Dorsolateral prefrontal cortex (tissue), 120 donors: ENCODE measurements at regions of chr9 and their contacts with region 1.

Region 1: GRCh38 chr9:127224178-127224882 is 40.2 kb upstream of the GARNL3 start:
- DNase-seq: peak; percentile 73 to 95 (median 90)
- H3K4me3 ChIP-seq: peak overlapping the region; percentile 45 to 91 (median 71)
- H3K27ac ChIP-seq: peak overlapping the region in 56 of 59 donors; percentile 32 to 94 (median 86)
- H3K27me3 ChIP-seq: no peaks in the 10 kb centered on the region
- CTCF ChIP-seq: peak in 17 of 56 donors; percentile 6 to 34 (median 17)

Region 2: DNA sequence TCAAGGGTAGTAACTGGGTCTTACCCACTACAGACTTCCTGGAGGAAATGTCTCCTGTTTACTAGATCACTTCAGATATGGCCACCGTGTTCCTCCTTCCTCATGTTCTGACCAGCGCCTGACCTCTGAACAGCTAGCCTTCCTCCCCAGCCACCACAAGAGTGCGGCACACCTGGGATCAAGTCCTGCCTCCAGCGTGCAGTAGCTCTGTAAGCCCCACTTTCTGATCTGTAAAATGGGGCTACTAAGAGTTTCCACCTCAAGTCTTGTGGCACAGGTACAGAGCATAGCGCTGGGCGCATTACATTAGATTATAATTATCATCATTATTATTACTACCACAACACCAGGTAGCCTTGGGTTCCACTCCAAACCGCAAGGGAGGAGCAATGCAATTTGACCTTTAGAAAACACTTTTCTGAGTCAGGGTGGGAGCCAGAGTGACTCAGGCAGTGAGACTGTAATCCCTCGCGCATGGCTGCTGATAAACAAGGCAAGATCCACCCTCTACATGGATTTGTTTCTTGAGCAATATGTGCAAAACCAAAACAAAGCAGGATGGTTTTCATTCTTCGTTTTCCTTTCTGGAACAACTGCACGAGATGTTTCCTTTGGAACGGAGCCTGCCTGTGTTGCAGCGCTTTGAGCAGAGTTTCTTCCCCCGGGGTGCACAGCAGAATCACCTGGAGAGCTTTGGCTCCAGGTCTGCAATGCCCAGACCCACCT is 36.9 kb before region 1 on chr9:
- intact Hi-C with region 1: no loop called
- DNase-seq: peak in 2 of 10 donors; percentile 9 to 36
- H3K4me3 ChIP-seq: no peak overlapping the region
- H3K27ac ChIP-seq: peak overlapping the region in 57 of 59 donors; percentile 34 to 94 (median 85)
- H3K27me3 ChIP-seq: no peaks in the 10 kb centered on the region
- CTCF ChIP-seq: no peak

Region 3: GRCh38 chr9:127263664-127264063 is 39.3 kb after region 1 on chr9:
- intact Hi-C with region 1: loop called in 1 of 2 experiments (anchors 5 kb)
- DNase-seq: peak in 2 of 10 donors; percentile 42 to 70
- H3K4me3 ChIP-seq: peak overlapping the region in 49 of 59 donors; percentile 0 to 65 (median 51)
- H3K27ac ChIP-seq: peak overlapping the region; percentile 43 to 95 (median 88)
- H3K27me3 ChIP-seq: no peaks in the 10 kb centered on the region
- CTCF ChIP-seq: no peak

Region 4: GRCh38 chr9:127283917-127284316 is 59.6 kb after region 1 on chr9:
- intact Hi-C with region 1: loop called (anchors 5 kb)
- DNase-seq: peak in 9 of 10 donors; percentile 47 to 73 (median 61)
- H3K4me3 ChIP-seq: no peak overlapping the region
- H3K27ac ChIP-seq: peak overlapping the region in 38 of 59 donors; percentile 8 to 96 (median 50)
- H3K27me3 ChIP-seq: no peaks in the 10 kb centered on the region
- CTCF ChIP-seq: peak in 50 of 56 donors; percentile 12 to 67 (median 42)

Region 5: GRCh38 chr9:127396808-127397497 is 172.6 kb after region 1 on chr9 and contains the start of gene SLC2A8:
- intact Hi-C with region 1: loop called in 1 of 2 experiments (anchors 2 kb)
- DNase-seq: peak; percentile 96 to 100 (median 99)
- H3K4me3 ChIP-seq: peak within 1 kb of the TSS; percentile 68 to 99 (median 89)
- H3K27ac ChIP-seq: peak within 1 kb of the TSS in 48 of 59 donors; percentile 4 to 91 (median 72)
- H3K27me3 ChIP-seq: no peaks in the 10 kb centered on the region
- CTCF ChIP-seq: peak in 29 of 56 donors; percentile 4 to 55 (median 27)
- total RNA-seq, gene SLC2A8: 20.2 to 51.7 (median 29.5) TPM

Region 6: DNA sequence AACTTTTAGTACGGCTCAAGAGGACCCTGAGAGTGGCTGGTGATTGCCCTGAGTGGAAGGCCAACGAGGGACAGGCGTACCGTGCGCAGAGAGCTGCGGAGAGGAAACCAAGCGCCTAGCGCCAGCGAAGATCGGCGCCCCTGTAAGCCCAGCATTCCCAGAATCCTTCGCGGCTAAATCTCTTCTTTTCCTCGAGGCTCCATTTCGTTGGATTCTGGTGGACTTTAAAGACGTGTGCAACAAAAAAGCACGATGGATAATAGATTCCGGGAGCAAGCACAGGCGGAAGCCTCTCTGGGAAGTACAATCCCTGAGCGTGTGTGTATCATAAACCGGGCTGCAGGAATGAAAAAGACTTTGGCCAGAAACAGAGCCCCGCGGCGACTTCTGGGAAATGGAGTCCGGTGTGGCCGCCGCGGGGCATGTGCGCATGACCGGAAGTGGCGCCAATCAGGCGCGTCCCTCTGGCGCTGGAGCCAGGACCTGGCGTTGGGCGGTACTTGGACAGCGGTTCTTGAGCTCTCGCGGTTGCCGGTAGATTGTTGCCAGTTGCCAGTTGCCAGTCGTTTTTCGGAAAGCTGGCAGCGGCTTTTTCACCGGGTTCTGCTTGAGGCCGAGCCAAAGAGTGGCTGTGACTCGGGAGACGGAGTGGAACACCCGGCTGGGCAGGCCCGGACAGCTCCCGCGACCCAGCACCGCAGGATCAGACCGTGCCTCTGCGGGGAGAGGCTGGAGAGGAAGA is 199.8 kb after region 1 on chr9 and contains the start of gene ZNF79:
- intact Hi-C with region 1: loop called in 1 of 2 experiments (anchors 10 kb)
- DNase-seq: peak; percentile 86 to 94 (median 90)
- H3K4me3 ChIP-seq: peak within 1 kb of the TSS; percentile 76 to 100 (median 94)
- H3K27ac ChIP-seq: peak within 1 kb of the TSS; percentile 79 to 100 (median 97)
- H3K27me3 ChIP-seq: no peaks in the 10 kb centered on the region
- CTCF ChIP-seq: peak in 26 of 56 donors; percentile 2 to 62 (median 24)
- total RNA-seq, gene ZNF79: 8.1 to 16.9 (median 10.9) TPM